ENCODE measurements at regions of chr5 and their contacts with region 1.

Region 1: DNA sequence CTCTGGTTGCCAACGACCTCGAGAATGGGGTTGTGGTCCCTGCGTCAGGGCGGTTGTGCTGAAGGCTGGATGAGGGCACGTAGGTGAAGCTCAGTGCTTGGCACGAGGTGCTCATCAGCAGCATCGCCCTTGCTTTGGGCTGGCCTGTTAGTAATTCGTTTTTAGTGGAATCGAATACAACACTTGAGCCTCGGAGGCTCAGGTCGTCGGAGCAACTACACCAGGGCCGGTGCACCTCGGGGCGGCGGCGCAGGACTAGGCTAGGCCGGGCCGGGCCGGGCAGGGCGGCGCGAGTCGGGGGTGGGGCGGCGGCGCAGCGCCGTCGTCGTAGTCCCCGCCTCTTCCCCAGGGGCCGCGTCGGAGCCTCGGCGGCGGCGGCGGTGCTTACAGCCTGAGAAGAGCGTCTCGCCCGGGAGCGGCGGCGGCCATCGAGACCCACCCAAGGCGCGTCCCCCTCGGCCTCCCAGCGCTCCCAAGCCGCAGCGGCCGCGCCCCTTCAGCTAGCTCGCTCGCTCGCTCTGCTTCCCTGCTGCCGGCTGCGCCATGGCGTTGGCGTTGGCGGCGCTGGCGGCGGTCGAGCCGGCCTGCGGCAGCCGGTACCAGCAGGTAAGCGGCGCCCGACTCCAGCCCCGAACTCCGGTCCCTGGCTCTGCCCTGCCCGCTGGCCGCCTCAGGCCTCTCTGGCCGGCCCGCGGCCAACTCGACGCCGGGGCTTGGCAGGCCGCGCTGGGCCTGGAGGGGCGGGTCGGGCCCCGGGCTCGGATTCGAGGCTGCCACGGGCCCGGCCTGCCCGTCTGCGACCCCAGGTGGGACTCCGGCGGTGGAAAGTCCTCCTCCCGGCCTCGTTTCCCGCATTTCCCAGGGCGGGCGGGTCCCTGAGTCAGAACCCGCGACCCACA is at the start of gene NDFIP1:
- DNase-seq: peak; percentile 86
- H3K4me3 Mint-ChIP-seq: peak within 1 kb of the TSS; percentile 94
- H3K27ac Mint-ChIP-seq: peak within 1 kb of the TSS; percentile 90
- H3K4me1 Mint-ChIP-seq: peaks cover 51% of the 10 kb centered on the region
- H3K27me3 Mint-ChIP-seq: no peaks in the 10 kb centered on the region
- total RNA-seq, gene NDFIP1: 57.1 to 59.3 TPM

Region 2: DNA sequence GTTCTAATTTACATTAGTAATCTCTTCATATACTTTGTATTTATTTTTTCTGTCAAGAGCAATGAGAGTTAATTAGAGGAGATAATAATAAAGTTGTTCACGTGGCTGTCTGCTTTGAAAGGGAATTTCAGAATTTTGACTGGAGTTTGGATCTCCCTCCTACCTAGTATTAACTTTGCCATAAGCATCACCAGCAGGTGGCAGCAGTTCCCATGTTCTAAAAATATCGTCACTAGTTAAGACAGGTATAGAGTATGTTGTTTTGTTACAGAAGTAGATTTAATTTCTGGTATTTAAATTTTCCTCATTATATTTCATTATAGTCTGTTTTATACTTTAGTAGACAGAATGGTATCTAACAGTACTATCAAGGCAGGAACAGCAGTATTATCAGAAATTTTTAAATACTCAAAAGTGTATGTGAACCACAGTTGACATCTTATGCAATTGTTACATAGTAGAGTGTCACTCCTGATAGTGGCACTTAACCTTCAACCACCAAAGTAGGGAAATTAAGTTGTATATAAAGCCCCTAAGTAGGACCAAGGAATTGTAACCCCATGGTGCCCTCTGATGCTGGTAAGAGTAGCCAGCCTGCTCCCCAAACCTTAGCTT is 116.2 kb before region 1 on chr5:
- CTCF ChIA-PET with region 1: interaction called, 11 read pairs
- POLR2A ChIA-PET with region 1: no interaction called
- DNase-seq: peak; percentile 79
- H3K4me3 Mint-ChIP-seq: no peak overlapping the region
- H3K27ac Mint-ChIP-seq: no peak overlapping the region
- H3K4me1 Mint-ChIP-seq: peaks cover 2% of the 10 kb centered on the region
- H3K27me3 Mint-ChIP-seq: no peaks in the 10 kb centered on the region

Region 3: GRCh38 chr5:142012792-142013388 is 95.8 kb before region 1 on chr5 and contains the start of gene GNPDA1:
- CTCF ChIA-PET with region 1: interaction called, 68 read pairs
- POLR2A ChIA-PET with region 1: interaction called, 128 read pairs
- DNase-seq: peak; percentile 77
- H3K4me3 Mint-ChIP-seq: peak within 1 kb of the TSS; percentile 79
- H3K27ac Mint-ChIP-seq: peak within 1 kb of the TSS; percentile 94
- H3K4me1 Mint-ChIP-seq: peaks cover 64% of the 10 kb centered on the region
- H3K27me3 Mint-ChIP-seq: no peaks in the 10 kb centered on the region
- total RNA-seq, gene GNPDA1: 27.1 to 32.1 TPM

Region 4: GRCh38 chr5:142034994-142035393 is 73.7 kb before region 1 on chr5:
- CTCF ChIA-PET with region 1: no interaction called
- POLR2A ChIA-PET with region 1: no interaction called
- DNase-seq: no peak
- H3K4me3 Mint-ChIP-seq: no peak overlapping the region
- H3K27ac Mint-ChIP-seq: no peak overlapping the region
- H3K4me1 Mint-ChIP-seq: peaks cover 13% of the 10 kb centered on the region
- H3K27me3 Mint-ChIP-seq: peaks cover 2% of the 10 kb centered on the region

Region 5: GRCh38 chr5:142095651-142096330 is 12.9 kb before region 1 on chr5:
- CTCF ChIA-PET with region 1: interaction called, 11 read pairs
- POLR2A ChIA-PET with region 1: interaction called, 71 read pairs
- DNase-seq: peak; percentile 87
- H3K4me3 Mint-ChIP-seq: peak overlapping the region; percentile 7
- H3K27ac Mint-ChIP-seq: peak overlapping the region; percentile 89
- H3K4me1 Mint-ChIP-seq: peaks cover 37% of the 10 kb centered on the region
- H3K27me3 Mint-ChIP-seq: no peaks in the 10 kb centered on the region

Region 6: DNA sequence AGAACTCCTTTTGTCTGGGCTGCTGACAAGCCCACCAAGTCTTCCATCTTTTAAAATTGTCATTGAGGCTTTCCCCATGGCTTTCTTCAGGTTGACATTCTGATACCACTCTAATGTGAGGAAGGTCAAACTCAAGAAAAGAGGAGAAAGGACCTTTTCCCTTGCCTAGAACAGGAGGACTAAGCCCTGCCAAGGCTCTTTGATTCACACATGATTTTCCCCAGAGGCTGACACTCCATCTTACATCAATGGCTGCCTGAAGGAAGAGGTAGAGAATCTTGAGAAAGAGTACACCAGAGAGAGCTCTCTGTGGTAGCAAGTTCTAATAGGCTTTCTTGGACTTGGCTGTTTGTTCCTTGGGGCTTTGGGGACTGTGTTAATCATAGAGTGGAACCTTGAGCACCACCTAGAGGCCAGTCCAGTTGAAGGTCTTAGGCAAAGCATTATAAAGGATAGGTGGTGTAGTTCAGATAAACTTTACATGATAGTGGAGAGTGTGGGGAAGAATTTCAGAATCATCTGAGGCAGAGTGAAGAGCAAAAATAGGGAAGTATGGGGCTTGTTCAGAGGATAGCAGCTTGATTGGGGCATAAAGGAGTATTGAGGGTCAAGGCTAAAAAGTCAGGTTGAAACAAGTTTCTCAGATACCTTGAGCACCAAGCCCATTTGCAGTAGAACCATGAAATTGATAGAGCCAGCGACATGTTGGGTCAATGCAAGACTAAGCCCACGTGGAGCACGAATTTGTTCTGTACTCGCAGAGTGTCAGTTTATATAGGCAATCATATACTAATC is 36.6 kb after region 1 on chr5:
- CTCF ChIA-PET with region 1: interaction called, 7 read pairs
- POLR2A ChIA-PET with region 1: interaction called, 10 read pairs
- DNase-seq: peak; percentile 69
- H3K4me3 Mint-ChIP-seq: no peak overlapping the region
- H3K27ac Mint-ChIP-seq: no peak overlapping the region
- H3K4me1 Mint-ChIP-seq: no peaks in the 10 kb centered on the region
- H3K27me3 Mint-ChIP-seq: no peaks in the 10 kb centered on the region

Measured in activated CD4-positive, alpha-beta memory T cell treated with anti-CD3 and anti-CD28 coated beads, Interleukin-2, amount 10 ng/mL, durations not matched to agents 7 days and 5 days (primary cell).